ENCODE measurements at regions of chr6 and their contacts with region 1.

Region 1: GRCh38 chr6:151702851-151703611 is 104.5 kb upstream of the ESR1 start:
- DNase-seq: no peak
- ATAC-seq: no peak
- H3K4me3 ChIP-seq: no peak overlapping the region
- H3K4me3 Mint-ChIP-seq: peak overlapping the region; percentile 29
- H3K27ac ChIP-seq: no peak overlapping the region
- H3K27ac Mint-ChIP-seq: no peak overlapping the region
- H3K4me1 ChIP-seq: peaks cover 13 to 27% of the 10 kb centered on the region in 2 donors
- H3K4me1 Mint-ChIP-seq: peaks cover 28% of the 10 kb centered on the region
- H3K27me3 ChIP-seq: no peaks in the 10 kb centered on the region
- H3K27me3 Mint-ChIP-seq: no peaks in the 10 kb centered on the region
- CTCF ChIP-seq: no peak

Region 2: GRCh38 chr6:151681433-151682059 is 21.5 kb before region 1 on chr6:
- CTCF ChIA-PET with region 1: interaction called, 5 read pairs
- POLR2A ChIA-PET with region 1: interaction called, 11 read pairs
- intact Hi-C with region 1: no loop called
- DNase-seq: peak; percentile 37
- ATAC-seq: peak; percentile 51
- H3K4me3 ChIP-seq: peak overlapping the region in 3 of 5 experiments; percentile 0 to 33 (median 18)
- H3K4me3 Mint-ChIP-seq: peak overlapping the region; percentile 58
- H3K27ac ChIP-seq: no peak overlapping the region
- H3K27ac Mint-ChIP-seq: no peak overlapping the region
- H3K4me1 ChIP-seq: peaks cover 5 to 10% of the 10 kb centered on the region in 2 donors
- H3K4me1 Mint-ChIP-seq: peaks cover 13% of the 10 kb centered on the region
- H3K27me3 ChIP-seq: peaks cover 0 to 3% (median 0%) of the 10 kb centered on the region in 4 experiments
- H3K27me3 Mint-ChIP-seq: no peaks in the 10 kb centered on the region
- CTCF ChIP-seq: no peak

Region 3: DNA sequence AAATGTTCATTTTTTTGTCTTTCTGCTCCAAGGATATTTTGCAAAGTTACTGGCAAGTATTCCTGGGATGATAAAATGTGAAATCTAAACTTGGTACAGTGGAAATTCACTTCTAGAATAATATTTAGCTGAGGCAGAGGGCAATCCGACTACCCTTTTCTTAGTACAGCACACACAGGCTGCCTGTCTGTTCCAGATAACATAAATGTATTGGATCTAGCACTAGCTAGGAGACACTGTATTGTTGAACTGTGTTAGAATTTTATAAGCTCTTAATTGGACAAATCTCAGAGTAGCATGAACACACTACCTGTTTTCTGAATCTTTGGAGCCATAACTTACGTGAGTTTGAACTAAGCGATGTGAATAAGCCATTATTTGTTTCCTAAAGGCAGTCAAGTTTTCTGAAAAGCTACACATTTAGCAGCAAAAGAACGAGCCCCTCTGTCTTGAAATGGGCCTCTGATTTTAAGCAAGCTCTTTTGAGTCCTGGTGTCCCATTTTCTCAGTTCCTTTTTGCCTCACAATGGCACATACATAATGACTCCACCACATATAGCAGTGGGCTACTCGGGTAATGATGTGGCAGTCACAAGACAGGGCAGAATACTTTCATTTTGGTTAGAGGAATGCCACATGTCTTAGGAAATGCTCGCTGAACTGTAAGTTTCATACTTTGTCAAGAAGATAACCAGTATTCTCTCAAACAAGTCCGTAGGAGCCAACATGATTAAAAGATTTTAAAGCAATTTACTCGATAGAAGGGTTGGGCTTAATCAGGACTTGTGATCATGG is 12.1 kb before region 1 on chr6:
- CTCF ChIA-PET with region 1: interaction called, 6 read pairs
- POLR2A ChIA-PET with region 1: no interaction called
- intact Hi-C with region 1: loop called (anchors 1 kb)
- DNase-seq: peak; percentile 82
- ATAC-seq: peak; percentile 84
- H3K4me3 ChIP-seq: peak overlapping the region in 4 of 5 experiments; percentile 15 to 64 (median 41)
- H3K4me3 Mint-ChIP-seq: peak overlapping the region; percentile 75
- H3K27ac ChIP-seq: peak overlapping the region; percentile 65 to 76
- H3K27ac Mint-ChIP-seq: peak overlapping the region; percentile 91
- H3K4me1 ChIP-seq: peaks cover 19 to 20% of the 10 kb centered on the region in 2 donors
- H3K4me1 Mint-ChIP-seq: peaks cover 23% of the 10 kb centered on the region
- H3K27me3 ChIP-seq: no peaks in the 10 kb centered on the region
- H3K27me3 Mint-ChIP-seq: no peaks in the 10 kb centered on the region
- CTCF ChIP-seq: no peak